ENCODE measurements at regions of chr21 and their contacts with region 1.

Region 1: DNA sequence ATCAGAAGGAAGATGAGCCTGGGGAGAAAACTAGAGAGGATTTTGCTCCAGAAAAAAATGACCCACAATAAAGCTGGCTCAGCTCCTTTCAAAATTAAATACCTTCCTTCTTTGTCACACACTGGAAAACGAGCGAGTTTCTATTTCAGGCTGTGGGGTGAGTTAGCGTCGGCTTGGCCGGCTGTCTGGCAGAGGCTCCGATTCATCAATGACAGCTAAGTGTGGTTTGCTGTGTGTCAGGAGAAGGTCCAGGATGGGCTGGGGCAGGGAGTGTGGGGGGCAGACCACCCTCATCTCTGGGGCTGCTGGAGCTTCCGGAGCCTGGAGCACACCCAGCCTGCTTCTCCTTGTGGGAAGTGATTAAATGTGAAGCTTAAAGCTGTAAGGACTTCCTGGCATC is 120.2 kb downstream of the ETS2 start:
- DNase-seq: peak; percentile 79
- H3K4me3 Mint-ChIP-seq: no peak overlapping the region
- H3K27ac Mint-ChIP-seq: peak overlapping the region; percentile 76
- H3K4me1 Mint-ChIP-seq: peaks cover 18% of the 10 kb centered on the region
- H3K27me3 Mint-ChIP-seq: no peaks in the 10 kb centered on the region
- CTCF ChIP-seq: no peak

Region 2: GRCh38 chr21:38913120-38913892 is 12.6 kb before region 1 on chr21:
- CTCF ChIA-PET with region 1: interaction called, 4 read pairs
- POLR2A ChIA-PET with region 1: interaction called, 22 read pairs
- intact Hi-C with region 1: no loop called
- DNase-seq: peak; percentile 92
- H3K4me3 Mint-ChIP-seq: no peak overlapping the region
- H3K27ac Mint-ChIP-seq: no peak overlapping the region
- H3K4me1 Mint-ChIP-seq: peaks cover 9% of the 10 kb centered on the region
- H3K27me3 Mint-ChIP-seq: no peaks in the 10 kb centered on the region
- CTCF ChIP-seq: no peak

Region 3: GRCh38 chr21:38958940-38959691 is 33.2 kb after region 1 on chr21:
- CTCF ChIA-PET with region 1: interaction called, 3 read pairs
- POLR2A ChIA-PET with region 1: interaction called, 14 read pairs
- intact Hi-C with region 1: no loop called
- DNase-seq: peak; percentile 49
- H3K4me3 Mint-ChIP-seq: no peak overlapping the region
- H3K27ac Mint-ChIP-seq: peak overlapping the region; percentile 86
- H3K4me1 Mint-ChIP-seq: peaks cover 31% of the 10 kb centered on the region
- H3K27me3 Mint-ChIP-seq: no peaks in the 10 kb centered on the region
- CTCF ChIP-seq: no peak

Region 4: GRCh38 chr21:39125752-39126485 is 200.0 kb after region 1 on chr21:
- CTCF ChIA-PET with region 1: interaction called, 5 read pairs
- POLR2A ChIA-PET with region 1: no interaction called
- intact Hi-C with region 1: loop called (anchors 1 kb)
- DNase-seq: peak; percentile 78
- H3K4me3 Mint-ChIP-seq: no peak overlapping the region
- H3K27ac Mint-ChIP-seq: peak overlapping the region; percentile 59
- H3K4me1 Mint-ChIP-seq: peaks cover 6% of the 10 kb centered on the region
- H3K27me3 Mint-ChIP-seq: no peaks in the 10 kb centered on the region
- CTCF ChIP-seq: peak; percentile 72

Measured in MCF 10A (cell line).